Activated CD8-positive, alpha-beta memory T cell treated with anti-CD3 and anti-CD28 coated beads, Interleukin-2, amount 10 ng/mL, durations not matched to agents 7 days and 5 days (primary cell): ENCODE measurements at regions of chr17 and their contacts with region 1.

Region 1: DNA sequence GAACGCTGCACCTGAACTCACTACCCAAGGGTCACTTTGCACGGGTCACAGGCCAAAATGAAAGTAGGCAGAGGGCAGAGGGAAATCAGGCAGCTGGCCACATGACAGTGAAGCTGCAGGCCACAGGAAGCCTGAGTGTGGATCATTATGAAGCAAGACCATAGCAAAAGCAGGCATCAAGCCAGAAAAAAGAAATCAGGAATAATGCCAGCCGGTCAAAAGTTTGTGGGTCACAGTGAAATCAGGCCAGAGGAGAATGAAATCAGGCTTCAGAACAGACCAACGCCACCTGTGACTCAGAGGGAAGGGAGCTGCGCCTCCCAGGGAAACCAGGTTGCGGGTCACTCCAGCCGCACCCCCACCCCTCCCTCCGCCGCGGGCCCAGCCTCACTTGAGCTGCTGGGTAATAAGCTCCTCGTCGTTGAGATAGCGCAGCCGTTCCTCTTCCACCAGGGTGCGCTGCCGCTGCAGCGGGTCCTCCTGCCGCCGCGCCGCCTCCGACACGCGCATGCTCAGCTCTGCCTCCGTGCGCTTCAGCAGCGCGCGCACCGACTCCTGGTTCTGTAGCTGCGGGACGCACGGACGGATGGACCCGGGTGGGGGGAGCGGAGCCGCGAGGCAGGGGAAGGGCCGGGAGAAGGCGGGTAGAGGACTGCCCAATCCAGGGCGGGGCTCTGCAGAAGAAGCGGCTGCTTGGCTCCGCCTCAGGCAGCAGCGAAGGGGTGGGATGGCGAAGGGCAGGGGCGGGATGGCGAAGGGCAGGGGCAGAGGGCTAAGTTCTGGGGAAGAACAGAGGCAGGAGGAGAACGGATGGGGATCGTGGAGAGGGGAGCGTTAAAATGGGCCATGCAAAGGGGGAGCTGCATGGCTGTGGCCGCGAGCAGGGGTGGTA is 47.7 kb downstream of the SRCIN1 start:
- DNase-seq: peak; percentile 92
- ATAC-seq: peak; percentile 85
- H3K4me3 Mint-ChIP-seq: peak overlapping the region; percentile 78
- H3K27ac Mint-ChIP-seq: no peak overlapping the region
- H3K4me1 Mint-ChIP-seq: peaks cover 24% of the 10 kb centered on the region
- H3K27me3 Mint-ChIP-seq: peaks cover 63% of the 10 kb centered on the region

Region 2: DNA sequence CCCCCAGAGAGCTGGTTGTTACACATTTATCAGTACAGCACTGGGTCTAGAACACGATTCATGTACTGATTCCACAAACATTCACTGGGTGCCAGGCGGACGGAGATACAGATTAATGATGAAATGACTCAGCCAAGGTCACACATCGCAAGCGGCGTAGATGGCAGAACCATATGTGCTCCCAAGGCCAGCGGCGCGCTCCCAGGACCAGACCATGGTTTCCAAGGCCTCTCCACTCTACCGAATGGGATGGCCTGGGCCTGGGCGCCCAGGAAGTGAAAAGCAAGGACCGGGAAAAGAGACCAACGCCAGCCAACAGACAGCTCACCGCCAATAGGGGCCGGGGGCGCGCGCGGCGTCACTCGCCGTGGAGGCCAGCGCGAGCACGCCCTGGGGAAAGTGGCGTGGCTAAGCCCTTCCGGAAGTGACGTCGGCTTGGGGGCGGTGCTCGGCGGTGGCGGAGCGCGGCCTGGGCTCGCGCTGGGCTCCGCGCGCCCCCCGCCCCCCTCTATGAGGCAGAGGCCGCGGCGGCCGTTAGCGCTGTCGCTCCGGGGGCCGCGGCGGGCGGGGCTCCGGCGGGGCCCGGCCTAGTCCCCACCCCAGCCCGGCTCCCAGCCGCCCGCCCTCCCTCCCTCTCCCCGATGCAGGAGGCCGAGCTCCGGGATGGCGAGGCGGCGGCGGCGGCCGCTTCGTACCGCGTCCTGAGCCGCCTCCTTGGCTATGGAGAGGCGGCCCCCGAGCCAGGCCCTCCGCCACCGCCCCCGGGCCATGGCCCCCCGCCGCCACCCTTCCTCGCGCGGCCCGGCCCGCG is 206.5 kb before region 1 on chr17 and contains the start of gene SOCS7:
- CTCF ChIA-PET with region 1: interaction called, 10 read pairs
- DNase-seq: peak; percentile 93
- ATAC-seq: peak; percentile 92
- H3K4me3 Mint-ChIP-seq: peak within 1 kb of the TSS; percentile 83
- H3K27ac Mint-ChIP-seq: peak within 1 kb of the TSS; percentile 95
- H3K4me1 Mint-ChIP-seq: peaks cover 38% of the 10 kb centered on the region
- H3K27me3 Mint-ChIP-seq: no peaks in the 10 kb centered on the region
- total RNA-seq, gene SOCS7: 16.2 to 16.8 TPM

Region 3: DNA sequence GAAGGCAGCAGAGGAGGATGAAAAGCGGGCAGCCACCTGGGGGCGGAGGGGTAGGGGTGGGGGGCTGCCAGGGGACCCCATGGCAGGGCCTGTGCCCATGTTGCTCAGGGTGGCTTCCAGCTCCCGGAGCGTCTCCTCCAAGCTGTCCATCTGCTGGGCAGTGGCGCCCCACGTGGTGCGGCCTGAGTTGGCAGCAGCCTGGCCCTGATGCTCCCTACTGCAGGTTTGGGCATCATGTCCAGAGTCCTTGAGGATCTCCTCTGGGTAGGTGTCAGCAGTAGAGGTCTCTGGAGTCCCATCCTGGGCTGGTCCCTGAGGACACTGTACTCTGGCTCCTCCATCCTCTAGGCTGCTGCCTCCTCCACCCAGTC is 13.3 kb before region 1 on chr17:
- CTCF ChIA-PET with region 1: interaction called, 24 read pairs
- DNase-seq: no peak
- ATAC-seq: no peak
- H3K4me3 Mint-ChIP-seq: no peak overlapping the region
- H3K27ac Mint-ChIP-seq: no peak overlapping the region
- H3K4me1 Mint-ChIP-seq: no peaks in the 10 kb centered on the region
- H3K27me3 Mint-ChIP-seq: peaks cover 20% of the 10 kb centered on the region

Region 4: GRCh38 chr17:38598536-38598935 is 40.5 kb after region 1 on chr17:
- CTCF ChIA-PET with region 1: interaction called, 184 read pairs
- DNase-seq: no peak
- ATAC-seq: no peak
- H3K4me3 Mint-ChIP-seq: no peak overlapping the region
- H3K27ac Mint-ChIP-seq: no peak overlapping the region
- H3K4me1 Mint-ChIP-seq: peaks cover 4% of the 10 kb centered on the region
- H3K27me3 Mint-ChIP-seq: peaks cover 91% of the 10 kb centered on the region

Region 5: GRCh38 chr17:38656959-38657823 is 99.1 kb after region 1 on chr17:
- CTCF ChIA-PET with region 1: interaction called, 365 read pairs
- DNase-seq: no peak
- ATAC-seq: no peak
- H3K4me3 Mint-ChIP-seq: no peak overlapping the region
- H3K27ac Mint-ChIP-seq: no peak overlapping the region
- H3K4me1 Mint-ChIP-seq: peaks cover 14% of the 10 kb centered on the region
- H3K27me3 Mint-ChIP-seq: peaks cover 25% of the 10 kb centered on the region

Region 6: GRCh38 chr17:38729886-38730525 is 171.9 kb after region 1 on chr17 and contains the start of gene CISD3:
- CTCF ChIA-PET with region 1: interaction called, 30 read pairs
- DNase-seq: peak; percentile 89
- ATAC-seq: peak; percentile 86
- H3K4me3 Mint-ChIP-seq: peak within 1 kb of the TSS; percentile 94
- H3K27ac Mint-ChIP-seq: peak within 1 kb of the TSS; percentile 95
- H3K4me1 Mint-ChIP-seq: peaks cover 70% of the 10 kb centered on the region
- H3K27me3 Mint-ChIP-seq: no peaks in the 10 kb centered on the region
- total RNA-seq, gene CISD3: 51.3 to 54.3 TPM